ENCODE measurements at regions of chr13 and their contacts with region 1.

Region 1: GRCh38 chr13:29508130-29508875 is 87.2 kb downstream of the SLC7A1 start:
- DNase-seq: peak; percentile 47
- H3K4me3 ChIP-seq: no peak overlapping the region
- H3K27ac ChIP-seq: no peak overlapping the region
- H3K27me3 ChIP-seq: no peaks in the 10 kb centered on the region
- CTCF ChIP-seq: peak; percentile 98

Region 2: DNA sequence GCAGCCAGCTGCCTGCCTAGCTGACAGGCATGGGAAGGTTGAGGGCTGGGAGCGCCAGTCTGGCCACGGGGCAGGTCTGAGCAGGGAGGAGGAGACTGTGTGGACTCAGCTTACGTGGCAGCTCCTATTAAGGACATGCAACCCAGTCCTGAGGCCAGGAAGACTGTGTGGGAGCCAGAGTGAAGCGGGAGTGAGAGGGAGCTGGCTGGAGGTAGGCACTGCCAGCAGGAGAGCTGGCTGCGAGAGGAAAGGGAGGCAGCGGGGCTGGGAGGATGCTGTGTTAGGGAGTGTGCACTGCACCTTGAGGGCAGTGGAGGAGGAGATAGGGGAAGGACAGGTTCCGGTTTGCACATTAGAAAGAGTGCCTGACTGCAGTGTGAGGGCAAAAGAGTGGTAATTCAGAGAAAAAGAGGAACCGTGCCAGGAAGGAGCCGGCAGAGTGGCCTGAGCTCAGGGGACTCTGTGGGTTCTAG is 12.0 kb before region 1 on chr13:
- CTCF ChIA-PET with region 1: interaction called, 20 read pairs
- POLR2A ChIA-PET with region 1: no interaction called
- DNase-seq: no peak
- H3K4me3 ChIP-seq: no peak overlapping the region
- H3K27ac ChIP-seq: no peak overlapping the region
- H3K27me3 ChIP-seq: peaks cover 39% of the 10 kb centered on the region
- CTCF ChIP-seq: no peak

Region 3: DNA sequence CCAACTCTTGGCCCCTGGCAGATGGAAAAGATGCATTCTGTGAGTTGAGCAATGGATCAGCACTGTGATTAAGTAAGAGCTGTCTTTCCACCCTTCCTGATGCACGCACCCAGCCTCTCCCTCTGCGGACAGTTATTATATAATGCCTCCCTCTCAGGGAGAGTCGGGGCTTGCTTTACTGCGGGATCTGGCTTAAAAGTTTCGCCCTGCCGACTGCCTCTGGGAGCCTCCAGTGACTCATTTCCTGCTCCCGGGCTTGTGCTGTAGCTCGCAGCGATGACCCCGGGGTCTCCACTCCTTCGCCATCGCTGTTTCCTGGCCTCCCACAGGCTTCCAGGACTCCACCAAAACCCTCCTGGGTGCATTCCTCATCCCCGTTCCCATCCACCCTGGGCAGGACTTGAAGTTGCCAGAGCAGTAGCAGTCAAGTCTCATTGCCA is 194.6 kb after region 1 on chr13:
- CTCF ChIA-PET with region 1: interaction called, 44 read pairs
- POLR2A ChIA-PET with region 1: no interaction called
- DNase-seq: peak; percentile 13
- H3K4me3 ChIP-seq: 0 out of 2 replicates have a peak overlapping the region, but pooled peaks have one; percentile 14
- H3K27ac ChIP-seq: peak overlapping the region; percentile 0
- H3K27me3 ChIP-seq: no peaks in the 10 kb centered on the region
- CTCF ChIP-seq: no peak

Region 4: DNA sequence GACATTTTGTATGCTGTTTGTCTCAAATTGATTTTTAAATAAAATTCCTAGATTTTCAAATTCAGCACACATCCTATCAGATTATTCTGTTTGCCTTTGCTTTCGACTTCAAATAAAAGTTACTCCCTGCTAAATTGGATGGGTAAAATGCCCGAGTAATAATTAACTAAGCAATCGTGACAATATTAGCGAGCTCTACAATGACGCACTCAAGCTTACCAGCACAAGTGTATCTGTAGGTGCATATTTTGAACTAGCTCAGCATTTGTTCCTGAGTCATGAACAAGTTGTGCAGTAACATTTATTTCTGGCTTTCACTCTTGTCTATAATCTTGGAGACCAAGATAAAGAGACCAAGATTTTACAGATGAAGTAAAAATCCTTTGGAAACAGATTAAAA is 228.8 kb after region 1 on chr13:
- CTCF ChIA-PET with region 1: interaction called, 11 read pairs
- POLR2A ChIA-PET with region 1: no interaction called
- DNase-seq: no peak
- H3K4me3 ChIP-seq: no peak overlapping the region
- H3K27ac ChIP-seq: no peak overlapping the region
- H3K27me3 ChIP-seq: peaks cover 14% of the 10 kb centered on the region
- CTCF ChIP-seq: no peak

Region 5: DNA sequence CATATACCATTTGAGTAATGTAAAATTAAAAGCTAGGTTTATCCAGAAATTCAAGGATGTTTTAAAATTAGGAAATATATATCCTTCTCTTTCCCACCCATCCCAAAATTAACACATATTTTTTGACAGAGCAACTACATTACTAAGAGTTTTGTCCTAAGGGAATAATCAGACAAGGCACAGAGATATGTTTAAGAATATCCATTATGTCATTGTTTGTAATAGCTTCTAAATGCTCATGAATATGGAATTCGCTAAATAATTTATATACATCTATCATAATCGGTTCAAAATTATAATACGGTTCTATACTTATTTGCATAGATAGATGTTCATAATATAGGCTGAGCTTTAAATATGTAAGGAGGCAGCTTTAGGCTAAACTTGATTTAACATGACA is 332.3 kb after region 1 on chr13:
- CTCF ChIA-PET with region 1: interaction called, 13 read pairs
- POLR2A ChIA-PET with region 1: no interaction called
- DNase-seq: no peak
- H3K4me3 ChIP-seq: no peak overlapping the region
- H3K27ac ChIP-seq: no peak overlapping the region
- H3K27me3 ChIP-seq: no peaks in the 10 kb centered on the region
- CTCF ChIP-seq: no peak

Region 6: DNA sequence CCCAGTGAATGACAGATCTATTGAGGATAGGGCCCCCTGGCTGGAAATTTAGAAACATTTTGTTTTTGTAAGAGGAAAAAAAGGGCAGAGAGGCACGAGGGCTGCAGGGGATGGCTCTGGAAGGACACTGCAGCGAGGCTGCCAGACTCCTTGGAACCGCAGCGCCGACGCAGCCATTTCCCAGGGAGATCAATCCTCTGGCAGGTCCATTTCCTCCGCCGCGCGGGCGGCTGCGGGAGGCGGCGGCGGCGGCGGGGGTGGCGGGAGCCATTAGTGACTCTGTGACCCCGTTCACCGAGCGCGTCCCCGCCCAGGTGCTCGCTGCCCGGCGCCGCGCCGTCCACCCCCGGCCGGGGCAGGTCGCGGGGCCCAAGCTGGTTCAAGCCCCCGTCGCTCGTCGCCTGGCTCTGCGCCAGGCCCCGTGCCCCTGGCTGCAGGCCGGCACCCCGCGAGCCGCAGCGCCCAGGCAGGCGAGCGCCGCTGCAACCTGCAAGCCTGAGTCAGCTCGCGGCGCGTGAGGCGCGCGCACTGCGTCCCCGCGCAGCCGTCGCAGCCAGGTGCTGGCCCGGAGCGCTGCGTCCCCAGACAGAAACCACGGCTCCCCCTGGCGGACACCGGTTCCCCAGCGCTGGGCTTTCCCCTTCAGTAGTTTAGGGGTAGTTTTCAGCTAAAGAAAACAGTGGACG is 606.4 kb after region 1 on chr13:
- CTCF ChIA-PET with region 1: interaction called, 24 read pairs
- POLR2A ChIA-PET with region 1: no interaction called
- DNase-seq: no peak
- H3K4me3 ChIP-seq: peak overlapping the region; percentile 58
- H3K27ac ChIP-seq: no peak overlapping the region
- H3K27me3 ChIP-seq: peaks cover 5% of the 10 kb centered on the region
- CTCF ChIP-seq: peak; percentile 90